GM12878 (cell line): ENCODE measurements at regions of chr18 and their contacts with region 1.

Region 1: GRCh38 chr18:59649591-59649990 is 47.6 kb downstream of the CCBE1 start:
- DNase-seq: no peak
- ATAC-seq: no peak
- H3K4me3 ChIP-seq: no peak overlapping the region
- H3K27ac ChIP-seq: no peak overlapping the region
- H3K4me1 ChIP-seq: no peaks in the 10 kb centered on the region
- H3K27me3 ChIP-seq: no peaks in the 10 kb centered on the region; a peak in 2 of 4 replicates
- CTCF ChIP-seq: no peak
- EP300 ChIP-seq: no peak
- POLR2A ChIP-seq: no peak
- RAD21 ChIP-seq: no peak

Region 2: GRCh38 chr18:59675346-59675745 is 25.8 kb after region 1 on chr18:
- CTCF ChIA-PET with region 1: no interaction called
- POLR2A ChIA-PET with region 1: no interaction called
- RAD21 ChIA-PET with region 1: no interaction called
- SMC1A ChIA-PET with region 1: no interaction called
- in situ Hi-C with region 1: no loop called
- intact Hi-C with region 1: loop called (anchors 2 kb)
- DNase-seq: no peak
- ATAC-seq: no peak
- H3K4me3 ChIP-seq: no peak overlapping the region
- H3K27ac ChIP-seq: no peak overlapping the region
- H3K4me1 ChIP-seq: no peaks in the 10 kb centered on the region
- H3K27me3 ChIP-seq: no peaks in the 10 kb centered on the region; a peak in 1 of 4 replicates
- CTCF ChIP-seq: no peak
- EP300 ChIP-seq: no peak
- POLR2A ChIP-seq: no peak
- RAD21 ChIP-seq: no peak